CD8-positive, alpha-beta memory T cell (primary cell): ENCODE measurements at regions of chr9 and their contacts with region 1.

Region 1: GRCh38 chr9:131382850-131383729 is 10.8 kb upstream of the PRRC2B start:
- DNase-seq: no peak
- H3K4me3 ChIP-seq: no peak overlapping the region
- H3K4me3 Mint-ChIP-seq: no peak overlapping the region
- H3K27ac ChIP-seq: no peak overlapping the region
- H3K27ac Mint-ChIP-seq: peak overlapping the region in 1 of 8 donors; percentile 9
- H3K4me1 ChIP-seq: no peaks in the 10 kb centered on the region
- H3K4me1 Mint-ChIP-seq: peaks cover 0 to 4% (median 4%) of the 10 kb centered on the region in 3 donors
- H3K27me3 ChIP-seq: no peaks in the 10 kb centered on the region
- H3K27me3 Mint-ChIP-seq: no peaks in the 10 kb centered on the region

Region 2: DNA sequence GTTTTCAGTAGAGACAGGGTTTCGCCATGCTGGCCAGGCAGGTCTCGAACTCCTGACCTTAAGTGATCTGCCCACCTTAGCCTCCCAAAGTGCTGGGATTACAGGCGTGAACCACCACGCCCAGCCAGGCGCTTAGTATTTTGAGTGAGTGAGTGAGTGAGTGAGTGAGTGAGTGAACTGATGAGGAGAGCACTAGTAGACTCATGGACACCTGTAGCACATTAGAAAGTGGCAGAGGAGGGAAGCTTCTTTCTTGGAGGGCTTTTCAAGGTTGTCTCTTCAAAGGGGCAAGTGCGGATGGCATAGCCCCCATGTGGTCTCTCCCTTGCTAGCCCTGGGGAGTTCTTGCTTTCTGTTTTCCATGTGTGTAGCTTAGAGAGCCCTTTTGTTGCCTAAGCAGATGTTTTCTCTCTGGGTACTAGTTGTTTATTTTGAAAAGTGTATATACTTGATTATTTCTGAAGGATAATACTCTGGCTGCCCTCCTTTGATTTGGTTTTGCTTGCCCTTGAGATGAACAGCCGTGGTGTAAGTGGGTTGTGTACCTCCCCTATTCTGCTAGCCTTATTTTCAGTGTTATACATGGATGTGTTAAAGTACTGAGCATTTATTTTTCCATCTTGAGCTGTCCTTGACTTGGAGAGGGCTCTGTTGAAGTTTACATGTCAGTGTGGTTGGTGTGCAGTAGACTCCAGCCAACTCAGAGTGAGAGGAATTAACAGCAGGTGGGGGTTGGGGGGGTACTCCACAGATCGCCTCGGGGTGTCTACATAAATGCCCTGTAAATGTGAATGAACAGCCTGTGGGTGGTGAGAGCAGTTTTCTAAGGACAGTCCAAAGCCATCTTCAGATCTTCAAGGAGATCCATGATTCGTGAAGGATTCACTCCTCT is 46.3 kb after region 1 on chr9:
- CTCF ChIA-PET with region 1: no interaction called
- POLR2A ChIA-PET with region 1: interaction called, 10 read pairs
- DNase-seq: no peak
- H3K4me3 ChIP-seq: no peak overlapping the region
- H3K4me3 Mint-ChIP-seq: peak overlapping the region in 3 of 7 donors; percentile 18 to 35 (median 25)
- H3K27ac ChIP-seq: no peak overlapping the region
- H3K27ac Mint-ChIP-seq: peak overlapping the region; percentile 13 to 93 (median 54)
- H3K4me1 ChIP-seq: peaks cover 29% of the 10 kb centered on the region
- H3K4me1 Mint-ChIP-seq: peaks cover 34 to 62% (median 61%) of the 10 kb centered on the region in 3 donors
- H3K27me3 ChIP-seq: no peaks in the 10 kb centered on the region
- H3K27me3 Mint-ChIP-seq: no peaks in the 10 kb centered on the region